ENCODE measurements at regions of chr4 and their contacts with region 1.

Region 1: GRCh38 chr4:86544310-86544966 is 49.7 kb upstream of the PTPN13 start:
- DNase-seq: peak; percentile 13
- ATAC-seq: peak; percentile 93
- H3K4me3 Mint-ChIP-seq: no peak overlapping the region
- H3K27ac Mint-ChIP-seq: peak overlapping the region; percentile 91
- H3K4me1 Mint-ChIP-seq: peaks cover 22% of the 10 kb centered on the region
- H3K27me3 Mint-ChIP-seq: no peaks in the 10 kb centered on the region

Region 2: GRCh38 chr4:86593688-86594558 is 49.5 kb after region 1 on chr4 and contains the start of gene PTPN13:
- CTCF ChIA-PET with region 1: no interaction called
- POLR2A ChIA-PET with region 1: no interaction called
- intact Hi-C with region 1: loop called in 1 of 2 experiments (anchors 2 kb)
- DNase-seq: peak; percentile 84
- ATAC-seq: peak; percentile 91
- H3K4me3 Mint-ChIP-seq: peak within 1 kb of the TSS; percentile 70
- H3K27ac Mint-ChIP-seq: peak within 1 kb of the TSS; percentile 16
- H3K4me1 Mint-ChIP-seq: peaks cover 14% of the 10 kb centered on the region
- H3K27me3 Mint-ChIP-seq: peaks cover 33% of the 10 kb centered on the region
- total RNA-seq, gene PTPN13: 1.4 to 1.5 TPM

Region 3: DNA sequence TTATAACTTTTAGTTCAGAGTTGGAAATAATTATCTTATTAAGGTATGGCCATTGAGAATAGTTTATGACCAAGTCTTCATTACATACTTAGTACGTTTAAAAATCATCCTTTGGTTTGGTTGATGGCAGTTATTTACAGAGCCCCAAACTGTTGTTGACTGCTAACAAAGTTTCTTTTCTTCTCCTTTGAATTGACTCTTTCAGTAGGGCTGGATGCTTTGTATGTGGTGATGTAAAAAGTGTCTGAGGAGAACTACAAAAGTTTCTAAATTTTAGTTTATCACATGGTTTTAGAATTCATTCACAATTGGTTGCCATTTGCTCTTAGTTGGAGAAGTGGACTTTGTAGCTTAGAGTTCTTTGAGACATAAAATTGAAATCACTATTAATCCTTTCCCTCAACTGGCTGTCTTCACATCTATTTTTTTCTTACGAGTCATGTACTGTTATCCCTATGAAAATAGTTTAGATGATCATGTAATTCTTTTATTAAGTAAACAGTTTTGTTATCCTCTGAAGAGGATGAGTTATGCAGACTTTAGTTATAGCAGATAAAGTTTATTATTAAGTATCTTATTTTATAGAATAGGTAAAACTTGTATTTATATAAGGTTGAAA is 64.4 kb after region 1 on chr4:
- CTCF ChIA-PET with region 1: no interaction called
- POLR2A ChIA-PET with region 1: no interaction called
- intact Hi-C with region 1: no loop called
- DNase-seq: no peak
- ATAC-seq: no peak
- H3K4me3 Mint-ChIP-seq: no peak overlapping the region
- H3K27ac Mint-ChIP-seq: no peak overlapping the region
- H3K4me1 Mint-ChIP-seq: no peaks in the 10 kb centered on the region
- H3K27me3 Mint-ChIP-seq: peaks cover 9% of the 10 kb centered on the region

Measured in activated CD4-positive, alpha-beta T cell treated with anti-CD3 and anti-CD28 coated beads for 36 hours (primary cell).